H1 (cell line): ENCODE measurements at regions of chr15 and their contacts with region 1.

Region 1: GRCh38 chr15:89129123-89129815 is 41.0 kb downstream of the ABHD2 start:
- DNase-seq: peak; percentile 33 to 80
- H3K4me3 ChIP-seq: no peak overlapping the region
- H3K27ac ChIP-seq: no peak overlapping the region
- H3K4me1 ChIP-seq: no peaks in the 10 kb centered on the region
- H3K27me3 ChIP-seq: no peaks in the 10 kb centered on the region
- CTCF ChIP-seq: peak; percentile 79 to 86 (median 84)
- EP300 ChIP-seq: no peak
- POLR2A ChIP-seq: no peak
- RAD21 ChIP-seq: peak; percentile 70 to 81

Region 2: GRCh38 chr15:89034288-89034687 is 95.0 kb before region 1 on chr15:
- CTCF ChIA-PET with region 1: interaction called, 10 read pairs
- POLR2A ChIA-PET with region 1: no interaction called
- DNase-seq: no peak
- H3K4me3 ChIP-seq: no peak overlapping the region
- H3K27ac ChIP-seq: no peak overlapping the region
- H3K4me1 ChIP-seq: no peaks in the 10 kb centered on the region
- H3K27me3 ChIP-seq: peaks cover 0 to 2% (median 0%) of the 10 kb centered on the region in 4 experiments; a peak in 1 of 7 replicates
- CTCF ChIP-seq: peak in 2 of 3 experiments; percentile 17 to 41; a peak in 2 of 4 replicates
- EP300 ChIP-seq: no peak
- POLR2A ChIP-seq: no peak
- RAD21 ChIP-seq: peak; percentile 37 to 52

Region 3: GRCh38 chr15:89087830-89088604 is 41.3 kb before region 1 on chr15 and contains the start of gene ABHD2:
- CTCF ChIA-PET with region 1: interaction called, 29 read pairs
- POLR2A ChIA-PET with region 1: interaction called, 3 read pairs
- DNase-seq: peak; percentile 99
- H3K4me3 ChIP-seq: peak within 1 kb of the TSS; percentile 84 to 90 (median 87)
- H3K27ac ChIP-seq: peak within 1 kb of the TSS; percentile 35; the same call in 1 of the 2 replicates
- H3K4me1 ChIP-seq: peaks cover 8 to 20% (median 12%) of the 10 kb centered on the region in 4 experiments
- H3K27me3 ChIP-seq: no peaks in the 10 kb centered on the region
- CTCF ChIP-seq: no peak
- EP300 ChIP-seq: peak in 1 of 2 experiments; percentile 56; a peak in 1 of 3 replicates
- POLR2A ChIP-seq: peak in 1 of 2 experiments; percentile 80; a peak in 2 of 3 replicates
- RAD21 ChIP-seq: no peak
- total RNA-seq, gene ABHD2: 23.7 and 27.6 TPM in 2 replicates

Region 4: DNA sequence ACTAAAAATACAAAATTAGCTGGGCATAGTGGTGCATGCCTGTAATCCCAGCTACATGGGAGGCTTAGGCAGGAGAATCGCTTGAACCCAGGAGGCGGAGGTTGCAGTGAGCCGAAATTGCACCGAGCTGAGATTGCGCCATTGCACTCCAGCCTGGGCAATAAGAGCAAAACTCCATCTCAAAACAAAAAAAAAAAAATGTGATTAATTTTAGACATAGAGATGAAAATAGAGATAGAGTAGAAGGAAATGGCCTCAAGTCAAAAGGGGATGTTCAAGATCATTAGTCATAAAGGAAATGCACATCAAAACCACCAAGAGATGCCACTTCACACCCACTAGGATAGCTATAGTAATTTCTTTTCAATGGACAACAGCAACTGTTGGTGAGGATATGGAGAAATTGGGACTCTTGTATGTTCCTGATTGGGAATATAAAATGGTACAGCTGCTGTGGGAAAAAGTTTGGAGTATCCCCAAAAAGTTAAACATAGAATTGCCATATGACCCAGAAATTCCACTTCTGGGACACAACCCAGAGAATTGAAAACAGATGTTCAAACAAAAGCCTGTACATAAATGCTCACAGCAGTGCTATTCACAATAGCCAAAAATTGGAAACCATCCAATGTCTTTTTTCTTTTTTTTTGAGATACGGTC is 14.4 kb after region 1 on chr15:
- CTCF ChIA-PET with region 1: interaction called, 50 read pairs
- POLR2A ChIA-PET with region 1: interaction called, 4 read pairs
- DNase-seq: no peak
- H3K4me3 ChIP-seq: no peak overlapping the region
- H3K27ac ChIP-seq: no peak overlapping the region
- H3K4me1 ChIP-seq: no peaks in the 10 kb centered on the region; a peak in 1 of 7 replicates
- H3K27me3 ChIP-seq: no peaks in the 10 kb centered on the region
- CTCF ChIP-seq: no peak
- EP300 ChIP-seq: no peak
- POLR2A ChIP-seq: no peak
- RAD21 ChIP-seq: no peak

Region 5: GRCh38 chr15:89171136-89172072 is 42.1 kb after region 1 on chr15:
- CTCF ChIA-PET with region 1: interaction called, 84 read pairs
- POLR2A ChIA-PET with region 1: no interaction called
- DNase-seq: peak; percentile 44 to 93
- H3K4me3 ChIP-seq: no peak overlapping the region
- H3K27ac ChIP-seq: no peak overlapping the region
- H3K4me1 ChIP-seq: peaks cover 0 to 5% (median 1%) of the 10 kb centered on the region in 4 experiments; a peak in 2 of 7 replicates
- H3K27me3 ChIP-seq: no peaks in the 10 kb centered on the region
- CTCF ChIP-seq: peak; percentile 32 to 87 (median 84)
- EP300 ChIP-seq: no peak
- POLR2A ChIP-seq: no peak
- RAD21 ChIP-seq: peak; percentile 79 to 87

Region 6: GRCh38 chr15:89378296-89379151 is 249.3 kb after region 1 on chr15:
- CTCF ChIA-PET with region 1: no interaction called
- POLR2A ChIA-PET with region 1: no interaction called
- DNase-seq: peak in 1 of 2 experiments; percentile 74
- H3K4me3 ChIP-seq: peak overlapping the region; percentile 32 to 55 (median 41)
- H3K27ac ChIP-seq: no peak overlapping the region
- H3K4me1 ChIP-seq: peaks cover 18 to 37% (median 30%) of the 10 kb centered on the region in 4 experiments
- H3K27me3 ChIP-seq: peaks cover 92 to 100% (median 98%) of the 10 kb centered on the region in 4 experiments
- CTCF ChIP-seq: no peak
- EP300 ChIP-seq: no peak
- POLR2A ChIP-seq: no peak
- RAD21 ChIP-seq: no peak

Region 7: GRCh38 chr15:89599021-89599420 is 469.8 kb after region 1 on chr15:
- CTCF ChIA-PET with region 1: no interaction called
- POLR2A ChIA-PET with region 1: no interaction called
- DNase-seq: no peak
- H3K4me3 ChIP-seq: no peak overlapping the region
- H3K27ac ChIP-seq: no peak overlapping the region
- H3K4me1 ChIP-seq: no peaks in the 10 kb centered on the region
- H3K27me3 ChIP-seq: no peaks in the 10 kb centered on the region
- CTCF ChIP-seq: no peak
- EP300 ChIP-seq: no peak
- POLR2A ChIP-seq: no peak
- RAD21 ChIP-seq: no peak